HCT116 (cell line): ENCODE measurements at regions of chr1 and their contacts with region 1.

Region 1: GRCh38 chr1:94608142-94608851 is 66.7 kb upstream of the F3 start:
- DNase-seq: no peak
- ATAC-seq: no peak
- H3K4me3 ChIP-seq: no peak overlapping the region
- H3K27ac ChIP-seq: peak overlapping the region; percentile 11; the same call in 1 of the 2 replicates
- H3K4me1 ChIP-seq: peaks cover 26 to 83% of the 10 kb centered on the region in 2 experiments
- H3K27me3 ChIP-seq: no peaks in the 10 kb centered on the region
- CTCF ChIP-seq: no peak
- POLR2A ChIP-seq: no peak
- RAD21 ChIP-seq: no peak

Region 2: DNA sequence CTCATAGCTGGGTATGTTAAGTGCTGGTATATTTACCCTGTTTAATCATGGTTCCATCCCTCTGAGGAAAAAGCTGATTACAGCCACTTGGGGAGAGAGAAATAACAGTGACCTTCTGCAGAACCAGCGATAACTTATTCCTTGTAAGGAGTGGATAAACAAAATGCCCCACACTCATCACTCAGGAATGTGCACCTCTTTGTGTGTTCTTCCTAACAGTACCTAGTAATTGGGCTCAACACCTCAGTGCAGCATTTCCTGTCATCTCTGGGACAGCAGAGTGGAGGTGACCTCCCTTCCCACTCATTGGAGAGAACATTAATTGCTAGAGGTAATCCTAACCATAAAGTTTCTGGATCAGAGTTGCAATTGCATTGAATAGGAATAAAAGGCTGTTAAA is 45.7 kb after region 1 on chr1:
- CTCF ChIA-PET with region 1: no interaction called
- POLR2A ChIA-PET with region 1: no interaction called
- RAD21 ChIA-PET with region 1: no interaction called
- intact Hi-C with region 1: no loop called
- DNase-seq: peak; percentile 52
- ATAC-seq: peak; percentile 83
- H3K4me3 ChIP-seq: peak overlapping the region in 1 of 2 experiments; percentile 13; a peak in 1 of 4 replicates
- H3K27ac ChIP-seq: peak overlapping the region; percentile 65
- H3K4me1 ChIP-seq: peaks cover 29 to 58% of the 10 kb centered on the region in 2 experiments
- H3K27me3 ChIP-seq: no peaks in the 10 kb centered on the region
- CTCF ChIP-seq: no peak
- POLR2A ChIP-seq: no peak
- RAD21 ChIP-seq: no peak

Region 3: DNA sequence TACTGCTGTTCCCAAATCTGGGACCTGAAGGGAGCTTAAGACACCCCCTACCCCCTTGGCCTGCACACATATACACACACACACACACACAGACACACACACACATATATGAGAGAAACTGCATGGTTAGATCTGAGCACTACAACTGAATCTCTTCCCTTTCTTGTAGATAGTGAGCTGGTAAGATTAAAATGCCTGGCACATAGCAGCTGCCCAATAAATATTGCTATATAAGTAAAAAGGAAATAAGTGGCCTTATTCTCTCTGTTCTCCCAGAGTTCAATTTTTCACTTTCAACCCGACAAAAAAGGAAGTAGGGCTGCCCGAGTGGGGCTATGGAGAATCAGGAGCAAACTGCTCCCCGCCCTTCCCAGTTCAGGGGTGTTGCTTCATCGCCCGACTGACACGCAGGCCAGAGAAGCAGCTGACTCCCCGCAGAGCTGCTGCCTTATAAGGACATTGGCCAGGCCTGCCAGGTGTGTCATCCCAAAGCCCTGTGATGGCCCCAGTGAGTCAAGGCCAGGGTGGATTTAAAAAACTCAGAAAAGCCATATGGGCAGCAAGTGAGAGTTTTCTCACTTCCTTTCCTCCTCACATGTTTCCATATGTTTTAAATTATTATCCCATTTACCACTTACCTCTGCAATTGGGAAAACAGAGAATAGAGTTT is 105.3 kb after region 1 on chr1:
- CTCF ChIA-PET with region 1: no interaction called
- POLR2A ChIA-PET with region 1: no interaction called
- RAD21 ChIA-PET with region 1: no interaction called
- intact Hi-C with region 1: loop called (anchors 5 kb)
- DNase-seq: peak; percentile 89
- ATAC-seq: peak; percentile 99
- H3K4me3 ChIP-seq: peak overlapping the region in 1 of 2 experiments; percentile 15; a peak in 2 of 4 replicates
- H3K27ac ChIP-seq: peak overlapping the region; percentile 31; the same call in 1 of the 2 replicates
- H3K4me1 ChIP-seq: peaks cover 17 to 54% of the 10 kb centered on the region in 2 experiments
- H3K27me3 ChIP-seq: no peaks in the 10 kb centered on the region
- CTCF ChIP-seq: no peak
- POLR2A ChIP-seq: no peak
- RAD21 ChIP-seq: no peak; the same call in 1 of the 2 replicates